Colonic mucosa (tissue), 4 donors: ENCODE measurements at regions of chr12 and their contacts with region 1.

Region 1: GRCh38 chr12:101773650-101774162 is 34.4 kb upstream of the SYCP3 start:
- DNase-seq: peak; percentile 76
- H3K4me3 ChIP-seq: no peak overlapping the region
- H3K27ac ChIP-seq: peak overlapping the region; percentile 28
- H3K4me1 ChIP-seq: no peaks in the 10 kb centered on the region
- H3K27me3 ChIP-seq: no peaks in the 10 kb centered on the region
- CTCF ChIP-seq: peak; percentile 97

Region 2: GRCh38 chr12:101414533-101415119 is 359.1 kb before region 1 on chr12:
- intact Hi-C with region 1: loop called (anchors 10 kb)
- DNase-seq: peak; percentile 59
- H3K4me3 ChIP-seq: no peak overlapping the region
- H3K27ac ChIP-seq: no peak overlapping the region
- H3K4me1 ChIP-seq: no peaks in the 10 kb centered on the region
- H3K27me3 ChIP-seq: no peaks in the 10 kb centered on the region
- CTCF ChIP-seq: peak; percentile 56

Region 3: DNA sequence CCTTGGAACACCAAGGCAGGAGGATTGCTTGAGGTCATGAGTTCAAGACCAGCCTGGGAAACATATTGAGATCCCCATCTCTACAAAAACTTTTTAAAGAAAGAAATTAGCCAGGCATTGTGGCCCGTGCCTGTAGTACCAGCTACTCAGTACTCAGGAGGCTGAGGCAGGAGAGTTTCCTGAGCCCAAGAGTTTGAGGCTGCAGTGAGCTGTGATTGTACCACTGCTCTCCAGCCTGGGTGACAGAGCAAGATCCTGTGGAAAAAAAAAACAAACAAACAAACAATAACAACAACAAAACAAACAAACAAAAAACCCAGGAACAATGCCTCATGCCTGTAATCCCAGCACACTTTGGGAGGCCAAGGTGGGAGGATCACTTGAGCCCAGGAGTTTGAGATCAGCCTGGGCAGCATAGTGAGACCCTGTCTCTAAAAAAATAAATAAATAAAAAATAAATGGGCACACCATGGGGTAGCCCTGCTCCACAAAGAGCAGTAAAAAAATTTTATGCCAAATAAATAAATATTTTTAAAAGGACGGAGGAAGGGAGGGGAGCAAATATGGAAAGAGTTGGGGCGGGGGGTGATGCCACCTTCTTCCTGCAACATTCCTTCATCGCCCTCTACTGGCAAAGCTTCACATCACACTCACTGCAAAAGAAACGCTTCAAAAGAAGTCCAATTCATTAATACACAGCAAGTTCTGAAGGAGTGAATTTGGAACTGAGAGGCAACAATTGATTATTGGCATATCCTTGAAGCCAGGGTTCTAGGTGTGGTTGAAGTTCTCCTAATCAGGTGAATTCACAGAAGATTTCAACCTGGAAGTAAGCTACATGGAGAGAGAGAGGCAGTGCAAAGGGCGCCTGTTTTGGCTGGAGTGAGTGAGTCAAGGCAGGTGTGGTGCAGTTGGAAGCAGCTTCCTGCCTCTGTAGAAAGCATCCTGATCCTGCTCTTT is 65.9 kb after region 1 on chr12:
- intact Hi-C with region 1: loop called (anchors 5 kb)
- DNase-seq: peak; percentile 87
- H3K4me3 ChIP-seq: no peak overlapping the region
- H3K27ac ChIP-seq: no peak overlapping the region
- H3K4me1 ChIP-seq: no peaks in the 10 kb centered on the region
- H3K27me3 ChIP-seq: no peaks in the 10 kb centered on the region
- CTCF ChIP-seq: peak; percentile 84

Region 4: GRCh38 chr12:102567031-102567985 is 793.6 kb after region 1 on chr12:
- intact Hi-C with region 1: no loop called
- DNase-seq: no peak
- H3K4me3 ChIP-seq: no peak overlapping the region
- H3K27ac ChIP-seq: no peak overlapping the region
- H3K4me1 ChIP-seq: no peaks in the 10 kb centered on the region
- H3K27me3 ChIP-seq: no peaks in the 10 kb centered on the region
- CTCF ChIP-seq: no peak